HepG2 (cell line): ENCODE measurements at regions of chr3 and their contacts with region 1.

Region 1: GRCh38 chr3:141431411-141432378 is 55.1 kb upstream of the RASA2 start:
- DNase-seq: peak; percentile 95
- ATAC-seq: peak; percentile 96
- H3K4me3 ChIP-seq: peak overlapping the region; percentile 46 to 58 (median 58)
- H3K27ac ChIP-seq: peak overlapping the region; percentile 95
- H3K4me1 ChIP-seq: peaks cover 54% of the 10 kb centered on the region
- H3K27me3 ChIP-seq: no peaks in the 10 kb centered on the region
- CTCF ChIP-seq: no peak
- EP300 ChIP-seq: peak; percentile 69 to 91; a peak in 3 of 4 replicates
- POLR2A ChIP-seq: peak in 1 of 2 experiments; percentile 61; a peak in 2 of 4 replicates
- RAD21 ChIP-seq: no peak

Region 2: GRCh38 chr3:141311496-141312353 is 120.0 kb before region 1 on chr3:
- CTCF ChIA-PET with region 1: no interaction called
- POLR2A ChIA-PET with region 1: interaction called, 12 read pairs
- in situ Hi-C with region 1: no loop called
- intact Hi-C with region 1: no loop called
- DNase-seq: peak; percentile 96
- ATAC-seq: peak; percentile 92
- H3K4me3 ChIP-seq: peak overlapping the region; percentile 65 to 84 (median 83)
- H3K27ac ChIP-seq: peak overlapping the region; percentile 34
- H3K4me1 ChIP-seq: peaks cover 28% of the 10 kb centered on the region
- H3K27me3 ChIP-seq: no peaks in the 10 kb centered on the region
- CTCF ChIP-seq: peak; percentile 97
- EP300 ChIP-seq: peak in 1 of 2 experiments; percentile 45; a peak in 1 of 4 replicates
- POLR2A ChIP-seq: peak; percentile 71 to 95
- RAD21 ChIP-seq: peak; percentile 93

Region 3: GRCh38 chr3:141370065-141370533 is 61.6 kb before region 1 on chr3:
- CTCF ChIA-PET with region 1: no interaction called
- POLR2A ChIA-PET with region 1: interaction called, 39 read pairs
- in situ Hi-C with region 1: no loop called
- intact Hi-C with region 1: no loop called
- DNase-seq: peak; percentile 94
- ATAC-seq: peak; percentile 76
- H3K4me3 ChIP-seq: peak overlapping the region in 2 of 3 experiments; percentile 50 to 73; a peak in 2 of 6 replicates
- H3K27ac ChIP-seq: peak overlapping the region; percentile 98
- H3K4me1 ChIP-seq: peaks cover 79% of the 10 kb centered on the region
- H3K27me3 ChIP-seq: no peaks in the 10 kb centered on the region
- CTCF ChIP-seq: peak; percentile 66
- EP300 ChIP-seq: peak in 1 of 2 experiments; percentile 28; a peak in 2 of 4 replicates
- POLR2A ChIP-seq: peak in 1 of 2 experiments; percentile 46; a peak in 2 of 4 replicates
- RAD21 ChIP-seq: peak; percentile 45; the same call in 1 of the 2 replicates

Region 4: DNA sequence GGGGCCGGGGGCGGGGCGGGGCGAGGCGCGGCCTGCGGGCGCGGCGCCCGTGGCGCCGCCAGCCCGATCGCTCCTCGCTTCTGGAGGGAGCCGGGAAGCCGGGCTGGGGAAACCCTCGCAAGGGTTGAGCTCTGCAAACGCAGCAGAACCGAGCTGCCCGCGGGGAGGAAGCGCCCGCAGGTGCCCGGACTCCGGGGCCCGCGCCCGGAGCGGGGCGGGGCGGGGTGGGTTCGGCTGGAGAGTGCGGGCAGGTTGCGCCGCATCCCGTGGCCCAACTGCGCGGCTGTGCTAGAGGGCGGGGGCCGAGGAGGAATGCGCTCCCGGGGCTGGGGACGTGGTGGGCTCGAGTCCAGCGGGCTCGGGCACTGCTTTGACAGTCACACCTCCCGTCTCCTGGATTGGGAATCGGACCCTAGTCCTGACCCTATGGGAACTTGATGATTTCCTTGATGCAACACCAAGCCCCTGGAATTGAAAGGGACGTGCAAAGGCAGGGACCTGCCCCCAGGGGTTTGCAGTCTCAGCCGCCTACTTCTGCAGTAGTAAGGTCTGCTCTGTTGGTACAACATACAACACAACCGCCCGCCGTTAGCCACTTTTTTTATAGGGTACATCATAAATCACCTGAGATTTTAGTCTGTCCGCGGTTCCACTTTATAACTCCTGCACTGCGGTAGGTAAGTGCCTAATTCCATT is 29.1 kb before region 1 on chr3:
- CTCF ChIA-PET with region 1: no interaction called
- POLR2A ChIA-PET with region 1: interaction called, 41 read pairs
- in situ Hi-C with region 1: no loop called
- intact Hi-C with region 1: loop called (anchors 1 kb)
- DNase-seq: peak; percentile 33
- ATAC-seq: peak; percentile 77
- H3K4me3 ChIP-seq: peak overlapping the region; percentile 62 to 79 (median 77)
- H3K27ac ChIP-seq: peak overlapping the region; percentile 90
- H3K4me1 ChIP-seq: peaks cover 52% of the 10 kb centered on the region
- H3K27me3 ChIP-seq: no peaks in the 10 kb centered on the region; a peak in 1 of 5 replicates
- CTCF ChIP-seq: no peak
- EP300 ChIP-seq: no peak
- POLR2A ChIP-seq: 0 out of 4 replicates have a peak, but pooled peaks of 1 of the 2 experiments have one; percentile 40
- RAD21 ChIP-seq: no peak

Region 5: GRCh38 chr3:141686466-141687291 is 255.0 kb after region 1 on chr3:
- CTCF ChIA-PET with region 1: no interaction called
- POLR2A ChIA-PET with region 1: no interaction called
- in situ Hi-C with region 1: no loop called
- intact Hi-C with region 1: no loop called
- DNase-seq: peak; percentile 46
- ATAC-seq: peak; percentile 95
- H3K4me3 ChIP-seq: peak overlapping the region; percentile 30 to 65 (median 56)
- H3K27ac ChIP-seq: no peak overlapping the region
- H3K4me1 ChIP-seq: no peaks in the 10 kb centered on the region
- H3K27me3 ChIP-seq: no peaks in the 10 kb centered on the region
- CTCF ChIP-seq: no peak
- EP300 ChIP-seq: no peak
- POLR2A ChIP-seq: no peak
- RAD21 ChIP-seq: no peak